Ascending aorta (tissue), 2 donors: ENCODE measurements at regions of chr3 and their contacts with region 1.

Region 1: GRCh38 chr3:159852821-159853505 is 135.7 kb upstream of the IL12A start:
- DNase-seq: peak; percentile 11 to 72
- H3K4me3 ChIP-seq: peak overlapping the region in 1 of 2 donors; percentile 49
- H3K27ac ChIP-seq: peak overlapping the region; percentile 78 to 80
- H3K4me1 ChIP-seq: peaks cover 10 to 39% of the 10 kb centered on the region in 2 donors
- H3K27me3 ChIP-seq: no peaks in the 10 kb centered on the region
- CTCF ChIP-seq: no peak

Region 2: GRCh38 chr3:159751146-159751545 is 101.8 kb before region 1 on chr3:
- intact Hi-C with region 1: no loop called
- DNase-seq: no peak
- H3K4me3 ChIP-seq: no peak overlapping the region
- H3K27ac ChIP-seq: no peak overlapping the region
- H3K4me1 ChIP-seq: no peaks in the 10 kb centered on the region
- H3K27me3 ChIP-seq: no peaks in the 10 kb centered on the region
- CTCF ChIP-seq: no peak

Region 3: GRCh38 chr3:159835126-159835525 is 17.8 kb before region 1 on chr3:
- intact Hi-C with region 1: loop called (anchors 2 kb)
- DNase-seq: no peak
- H3K4me3 ChIP-seq: no peak overlapping the region
- H3K27ac ChIP-seq: no peak overlapping the region
- H3K4me1 ChIP-seq: peaks cover 0 to 10% of the 10 kb centered on the region in 2 donors
- H3K27me3 ChIP-seq: no peaks in the 10 kb centered on the region
- CTCF ChIP-seq: no peak

Region 4: GRCh38 chr3:159872374-159873109 is 19.6 kb after region 1 on chr3:
- intact Hi-C with region 1: loop called (anchors 2 kb)
- DNase-seq: no peak
- H3K4me3 ChIP-seq: no peak overlapping the region
- H3K27ac ChIP-seq: no peak overlapping the region
- H3K4me1 ChIP-seq: peaks cover 0 to 8% of the 10 kb centered on the region in 2 donors
- H3K27me3 ChIP-seq: no peaks in the 10 kb centered on the region
- CTCF ChIP-seq: no peak